ENCODE measurements at regions of chr12 and their contacts with region 1.

Region 1: GRCh38 chr12:53352331-53353256 is 16.4 kb upstream of the SP7 start:
- DNase-seq: peak; percentile 84
- CTCF ChIP-seq: peak; percentile 74

Region 2: GRCh38 chr12:53414756-53415417 is 62.3 kb after region 1 on chr12:
- in situ Hi-C with region 1: loop called (anchors 5 kb)
- DNase-seq: no peak
- CTCF ChIP-seq: no peak